ENCODE measurements at regions of chr1 and their contacts with region 1.

Region 1: DNA sequence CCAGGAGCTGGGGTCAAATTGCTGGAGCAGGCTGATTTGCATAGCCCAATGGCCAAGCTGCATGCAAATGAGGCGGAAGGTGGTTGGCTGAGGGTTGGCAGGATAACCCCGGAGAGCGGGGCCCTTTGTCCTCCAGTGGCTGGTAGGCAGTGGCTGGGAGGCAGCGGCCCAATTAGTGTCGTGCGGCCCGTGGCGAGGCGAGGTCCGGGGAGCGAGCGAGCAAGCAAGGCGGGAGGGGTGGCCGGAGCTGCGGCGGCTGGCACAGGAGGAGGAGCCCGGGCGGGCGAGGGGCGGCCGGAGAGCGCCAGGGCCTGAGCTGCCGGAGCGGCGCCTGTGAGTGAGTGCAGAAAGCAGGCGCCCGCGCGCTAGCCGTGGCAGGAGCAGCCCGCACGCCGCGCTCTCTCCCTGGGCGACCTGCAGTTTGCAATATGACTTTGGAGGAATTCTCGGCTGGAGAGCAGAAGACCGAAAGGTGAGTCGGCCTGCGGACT is at the start of gene GADD45A:
- DNase-seq: peak; percentile 96 to 98
- H3K4me3 ChIP-seq: peak within 1 kb of the TSS; percentile 89
- H3K4me3 Mint-ChIP-seq: peak within 1 kb of the TSS; percentile 82
- H3K27ac Mint-ChIP-seq: peak within 1 kb of the TSS; percentile 94
- H3K4me1 ChIP-seq: peaks cover 51% of the 10 kb centered on the region
- H3K4me1 Mint-ChIP-seq: peaks cover 12% of the 10 kb centered on the region
- H3K27me3 ChIP-seq: no peaks in the 10 kb centered on the region
- H3K27me3 Mint-ChIP-seq: no peaks in the 10 kb centered on the region
- CTCF ChIP-seq: no peak
- total RNA-seq, gene GADD45A: 58.6 and 59.0 TPM in 2 replicates

Region 2: DNA sequence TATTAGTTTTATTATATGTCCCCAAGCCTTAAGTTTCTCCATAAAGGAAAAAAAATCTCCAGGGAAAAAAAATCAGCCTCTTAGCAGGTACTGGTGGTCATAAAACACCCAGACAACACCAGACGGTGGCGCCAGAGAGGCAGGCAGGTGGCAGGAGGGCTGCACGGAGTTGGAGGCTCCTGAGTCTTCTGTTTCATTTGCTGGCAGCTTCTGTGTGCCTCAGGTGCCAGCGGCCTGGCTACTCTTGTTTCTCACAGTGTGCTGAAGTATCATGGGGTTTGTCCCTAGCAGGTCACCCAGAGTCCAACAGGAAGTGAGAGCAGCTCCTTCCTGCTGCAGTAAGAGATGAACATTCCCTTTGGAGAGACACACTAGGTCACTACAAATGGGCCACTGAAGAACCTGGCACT is 123.4 kb before region 1 on chr1:
- CTCF ChIA-PET with region 1: interaction called, 7 read pairs
- POLR2A ChIA-PET with region 1: interaction called, 7 read pairs
- intact Hi-C with region 1: loop called (anchors 1 kb)
- DNase-seq: peak; percentile 90 to 92
- H3K4me3 ChIP-seq: no peak overlapping the region
- H3K4me3 Mint-ChIP-seq: no peak overlapping the region
- H3K27ac Mint-ChIP-seq: no peak overlapping the region
- H3K4me1 ChIP-seq: peaks cover 16% of the 10 kb centered on the region; the same call in 1 of the 2 replicates
- H3K4me1 Mint-ChIP-seq: no peaks in the 10 kb centered on the region
- H3K27me3 ChIP-seq: no peaks in the 10 kb centered on the region
- H3K27me3 Mint-ChIP-seq: no peaks in the 10 kb centered on the region
- CTCF ChIP-seq: peak; percentile 73 to 77

Region 3: DNA sequence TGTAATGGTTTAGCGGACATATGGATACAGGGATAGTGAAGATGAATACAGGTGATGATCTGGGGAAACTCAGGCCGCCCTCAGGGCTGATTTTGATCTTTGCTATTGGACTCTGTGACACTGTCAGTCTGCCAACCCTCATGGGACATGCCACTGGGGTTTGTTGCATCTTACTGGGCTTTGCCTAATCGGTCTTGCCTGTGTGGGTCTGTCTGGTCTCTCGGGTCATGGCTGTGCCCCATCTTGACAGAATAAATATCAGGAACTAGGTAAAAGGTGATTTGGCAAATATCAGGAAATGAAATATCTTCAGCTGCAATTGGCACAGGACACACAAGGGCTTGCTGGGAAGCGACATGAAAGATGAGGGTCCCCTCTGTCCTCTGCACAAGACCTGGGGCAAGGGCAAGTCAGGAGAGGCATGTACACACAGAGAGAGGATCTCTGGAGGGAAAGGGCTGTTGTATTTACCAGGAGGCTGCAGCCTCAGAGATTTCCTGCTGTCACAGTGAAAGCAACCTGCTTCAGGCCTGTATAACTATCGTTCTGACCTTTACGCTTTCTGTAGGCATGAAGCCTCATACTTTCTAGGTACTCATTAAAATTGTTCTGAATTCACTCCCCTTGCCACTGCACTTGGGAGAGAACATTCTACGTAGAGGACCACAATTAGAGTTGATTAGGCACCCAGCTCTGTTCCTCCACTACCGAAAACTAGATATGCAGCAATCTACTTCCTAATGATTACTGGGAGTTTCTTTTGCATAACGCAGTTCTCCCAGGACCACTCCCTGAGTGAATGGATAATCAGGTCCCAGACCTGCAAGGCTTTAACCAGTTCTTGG is 52.1 kb before region 1 on chr1:
- CTCF ChIA-PET with region 1: interaction called, 4 read pairs
- POLR2A ChIA-PET with region 1: interaction called, 10 read pairs
- intact Hi-C with region 1: loop called (anchors 2 kb)
- DNase-seq: no peak
- H3K4me3 ChIP-seq: no peak overlapping the region
- H3K4me3 Mint-ChIP-seq: no peak overlapping the region
- H3K27ac Mint-ChIP-seq: peak overlapping the region; percentile 67
- H3K4me1 ChIP-seq: peaks cover 63% of the 10 kb centered on the region
- H3K4me1 Mint-ChIP-seq: peaks cover 34% of the 10 kb centered on the region
- H3K27me3 ChIP-seq: no peaks in the 10 kb centered on the region
- H3K27me3 Mint-ChIP-seq: no peaks in the 10 kb centered on the region
- CTCF ChIP-seq: no peak

Region 4: DNA sequence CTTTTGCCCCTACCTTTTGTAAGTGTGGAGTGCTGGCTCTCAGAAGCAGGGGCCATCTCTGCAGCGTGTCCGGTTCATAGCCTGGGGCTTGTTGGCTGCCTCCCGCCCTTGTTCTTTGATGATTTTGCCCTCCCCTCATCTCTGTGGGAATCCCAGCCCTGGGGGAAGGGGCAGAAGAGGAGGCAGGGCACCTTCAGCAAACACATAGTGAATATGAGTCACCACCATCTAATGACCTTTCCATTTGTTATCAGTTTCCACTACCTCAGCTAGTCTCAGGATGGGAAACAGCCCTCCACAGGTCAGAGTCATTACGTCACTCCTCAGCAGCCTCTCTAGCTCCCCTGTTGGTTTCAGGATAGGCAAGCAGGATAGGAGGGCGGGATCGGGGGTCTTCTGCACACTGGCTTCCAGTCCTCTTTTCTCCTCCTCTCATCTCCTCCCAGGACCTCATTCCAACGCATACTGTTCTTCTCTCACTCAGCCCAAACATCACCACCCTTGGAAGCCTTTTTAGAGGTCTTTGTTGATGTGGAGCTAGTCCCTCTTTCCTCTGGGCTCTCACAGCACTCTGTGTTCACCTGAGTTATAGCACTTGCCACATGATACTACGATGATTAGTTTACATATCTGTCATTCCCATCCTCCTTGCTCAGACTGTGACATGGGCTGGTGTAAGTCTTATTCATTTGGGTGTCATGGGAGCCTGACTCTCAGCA is 15.7 kb after region 1 on chr1:
- CTCF ChIA-PET with region 1: interaction called, 8 read pairs
- POLR2A ChIA-PET with region 1: interaction called, 11 read pairs
- intact Hi-C with region 1: loop called (anchors 1 kb)
- DNase-seq: peak; percentile 85 to 90
- H3K4me3 ChIP-seq: no peak overlapping the region
- H3K4me3 Mint-ChIP-seq: peak overlapping the region; percentile 65
- H3K27ac Mint-ChIP-seq: peak overlapping the region; percentile 96
- H3K4me1 ChIP-seq: peaks cover 19% of the 10 kb centered on the region
- H3K4me1 Mint-ChIP-seq: peaks cover 15% of the 10 kb centered on the region
- H3K27me3 ChIP-seq: no peaks in the 10 kb centered on the region
- H3K27me3 Mint-ChIP-seq: no peaks in the 10 kb centered on the region
- CTCF ChIP-seq: peak; percentile 39 to 60

Region 5: DNA sequence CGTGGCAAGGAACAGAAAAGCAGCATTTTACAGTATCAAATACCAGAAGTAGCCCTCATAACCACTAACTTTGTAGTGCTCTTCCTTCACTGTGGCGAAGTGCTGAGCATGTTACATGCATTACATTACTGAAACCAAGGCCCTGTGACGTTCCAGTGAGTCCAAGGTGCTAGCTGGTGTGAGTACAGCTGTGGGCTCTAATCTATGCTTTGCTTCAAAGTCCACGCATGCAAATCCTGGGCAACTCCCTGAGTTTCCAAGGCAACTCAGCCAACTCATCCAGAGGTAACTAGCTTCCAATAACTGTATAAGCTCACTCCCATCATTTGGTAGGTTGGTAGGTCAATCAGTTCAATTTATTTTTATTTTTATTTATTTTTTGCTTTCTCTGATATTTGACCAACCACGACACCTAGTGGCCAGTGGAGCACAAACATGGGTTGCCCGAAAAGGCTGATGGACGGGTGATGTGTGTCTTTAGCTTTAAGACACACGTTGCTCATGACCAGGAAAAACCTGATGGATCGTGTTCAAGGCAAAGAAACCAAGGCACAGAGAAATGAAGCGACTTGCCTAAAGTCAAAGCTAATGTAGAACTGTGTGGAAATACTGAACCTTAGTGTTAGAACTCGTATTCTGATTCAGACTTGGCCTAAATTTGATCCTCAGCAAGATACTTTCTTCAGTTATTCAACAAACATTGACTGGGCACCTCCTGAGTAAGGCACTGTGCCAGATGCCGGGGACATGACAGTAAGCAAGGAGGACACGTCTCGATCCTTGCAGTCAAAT is 75.1 kb after region 1 on chr1:
- CTCF ChIA-PET with region 1: interaction called, 4 read pairs
- POLR2A ChIA-PET with region 1: interaction called, 11 read pairs
- intact Hi-C with region 1: loop called (anchors 1 kb)
- DNase-seq: peak; percentile 74 to 88
- H3K4me3 ChIP-seq: no peak overlapping the region
- H3K4me3 Mint-ChIP-seq: no peak overlapping the region
- H3K27ac Mint-ChIP-seq: peak overlapping the region; percentile 86
- H3K4me1 ChIP-seq: peaks cover 30% of the 10 kb centered on the region
- H3K4me1 Mint-ChIP-seq: peaks cover 7% of the 10 kb centered on the region
- H3K27me3 ChIP-seq: no peaks in the 10 kb centered on the region
- H3K27me3 Mint-ChIP-seq: no peaks in the 10 kb centered on the region
- CTCF ChIP-seq: peak; percentile 55 to 72

Measured in Caco-2 (cell line).